SK-N-SH (cell line): ENCODE measurements at regions of chr15 and their contacts with region 1.

Region 1: GRCh38 chr15:88657326-88658069 is 18.7 kb downstream of the ISG20 start:
- DNase-seq: peak; percentile 78
- H3K4me3 ChIP-seq: no peak overlapping the region; a peak in 1 of 4 replicates
- H3K27ac ChIP-seq: no peak overlapping the region
- H3K4me1 ChIP-seq: peaks cover 0 to 17% of the 10 kb centered on the region in 2 experiments; a peak in 1 of 4 replicates
- H3K27me3 ChIP-seq: no peaks in the 10 kb centered on the region
- CTCF ChIP-seq: peak; percentile 83
- EP300 ChIP-seq: no peak
- RAD21 ChIP-seq: peak; percentile 88

Region 2: DNA sequence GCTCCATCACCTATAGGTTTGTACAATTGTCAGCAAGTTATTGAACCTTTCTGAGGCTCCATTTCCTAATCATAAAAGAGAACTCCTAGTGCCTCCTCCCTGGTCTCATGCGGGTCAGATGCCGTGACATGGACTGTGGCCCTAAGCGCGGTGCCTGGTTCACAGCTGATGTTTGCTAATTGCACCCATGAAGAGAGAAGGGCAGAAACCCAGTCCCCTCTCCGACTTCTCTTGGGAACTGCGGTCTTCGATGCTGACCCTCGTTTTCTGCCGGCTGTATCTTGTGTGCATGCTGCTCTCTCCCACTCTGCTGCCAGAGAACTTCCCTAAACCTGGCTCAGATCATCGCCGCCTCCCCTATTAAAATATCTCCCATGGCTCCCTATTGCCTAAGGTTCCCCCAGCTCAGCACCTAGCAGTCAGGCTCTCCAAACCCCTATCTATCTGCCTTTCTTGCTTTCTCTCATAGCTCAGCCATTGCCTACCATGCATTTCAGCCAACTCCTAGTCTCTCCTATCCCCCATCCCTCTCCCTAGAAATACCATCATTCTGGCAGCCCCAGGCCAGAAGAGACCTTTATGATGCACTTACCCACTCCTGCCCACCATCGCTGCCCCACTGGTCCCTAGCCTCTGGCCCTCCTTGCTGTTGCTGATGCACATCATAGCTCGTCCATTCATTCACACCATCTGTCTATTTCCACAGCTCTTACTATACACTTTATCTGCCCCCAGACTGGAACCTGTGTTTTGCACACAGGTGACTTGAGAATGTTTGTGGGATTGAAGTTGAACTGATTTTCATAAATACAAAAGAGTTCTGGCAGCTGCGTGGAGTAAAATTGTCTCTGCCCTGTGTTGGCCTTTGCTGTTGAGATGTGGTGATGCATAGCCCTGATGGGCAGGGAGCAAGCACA is 12.1 kb before region 1 on chr15:
- CTCF ChIA-PET with region 1: interaction called, 10 read pairs
- POLR2A ChIA-PET with region 1: no interaction called
- DNase-seq: no peak
- H3K4me3 ChIP-seq: no peak overlapping the region
- H3K27ac ChIP-seq: no peak overlapping the region
- H3K4me1 ChIP-seq: peaks cover 6 to 16% of the 10 kb centered on the region in 2 experiments; a peak in 2 of 4 replicates
- H3K27me3 ChIP-seq: no peaks in the 10 kb centered on the region
- CTCF ChIP-seq: no peak
- EP300 ChIP-seq: no peak
- RAD21 ChIP-seq: no peak

Region 3: GRCh38 chr15:88695691-88696251 is 38.3 kb after region 1 on chr15:
- CTCF ChIA-PET with region 1: interaction called, 11 read pairs
- POLR2A ChIA-PET with region 1: no interaction called
- DNase-seq: no peak
- H3K4me3 ChIP-seq: no peak overlapping the region
- H3K27ac ChIP-seq: no peak overlapping the region
- H3K4me1 ChIP-seq: peaks cover 0 to 12% of the 10 kb centered on the region in 2 experiments; a peak in 1 of 4 replicates
- H3K27me3 ChIP-seq: no peaks in the 10 kb centered on the region; the same call in 1 of the 2 replicates
- CTCF ChIP-seq: no peak
- EP300 ChIP-seq: no peak
- RAD21 ChIP-seq: no peak

Region 4: GRCh38 chr15:88834211-88834812 is 176.8 kb after region 1 on chr15:
- CTCF ChIA-PET with region 1: interaction called, 50 read pairs
- POLR2A ChIA-PET with region 1: no interaction called
- DNase-seq: peak; percentile 64
- H3K4me3 ChIP-seq: peak overlapping the region in 1 of 2 experiments; percentile 41; a peak in 1 of 4 replicates
- H3K27ac ChIP-seq: no peak overlapping the region
- H3K4me1 ChIP-seq: no peaks in the 10 kb centered on the region
- H3K27me3 ChIP-seq: no peaks in the 10 kb centered on the region
- CTCF ChIP-seq: peak; percentile 62
- EP300 ChIP-seq: no peak
- RAD21 ChIP-seq: peak; percentile 68

Region 5: DNA sequence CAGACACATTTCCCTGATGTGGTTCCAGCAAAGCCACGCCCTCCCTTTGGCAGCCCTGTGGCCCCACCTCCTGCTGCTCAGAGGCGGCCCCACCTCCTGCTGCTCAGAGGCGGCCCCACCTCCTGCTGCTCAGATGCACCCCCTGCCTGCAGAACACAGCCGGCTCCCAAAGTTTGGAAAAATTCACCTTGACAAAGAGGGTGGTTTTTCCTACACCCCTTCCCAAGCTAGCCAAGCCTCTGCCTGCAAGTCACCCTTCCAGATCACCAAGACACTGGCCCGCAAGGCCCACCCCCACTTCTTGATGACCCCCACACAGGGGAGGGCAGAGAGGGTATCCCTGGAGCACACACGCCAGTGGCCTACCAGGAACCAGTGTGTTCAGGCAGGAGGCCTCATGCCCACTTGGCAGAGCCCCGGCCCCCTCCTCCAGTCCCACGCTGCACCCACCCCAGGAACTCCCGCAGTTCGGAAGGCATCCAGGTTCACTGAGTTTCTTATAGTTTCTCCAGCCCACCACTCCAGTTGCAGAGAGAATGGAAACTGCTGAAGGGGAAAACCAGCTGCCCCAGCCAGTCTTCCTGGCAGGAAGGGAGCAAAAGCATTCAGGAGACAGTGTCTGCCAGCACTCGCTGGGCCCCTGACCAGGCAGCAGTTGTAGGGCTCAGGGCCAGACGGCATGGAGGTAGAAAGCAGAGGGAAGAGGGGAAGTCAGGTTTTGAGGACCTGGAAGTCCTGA is 240.1 kb after region 1 on chr15:
- CTCF ChIA-PET with region 1: interaction called, 21 read pairs
- POLR2A ChIA-PET with region 1: no interaction called
- DNase-seq: peak; percentile 88
- H3K4me3 ChIP-seq: no peak overlapping the region
- H3K27ac ChIP-seq: peak overlapping the region in 1 of 2 experiments; percentile 36; a peak in 1 of 4 replicates
- H3K4me1 ChIP-seq: peaks cover 5 to 23% of the 10 kb centered on the region in 2 experiments; a peak in 2 of 4 replicates
- H3K27me3 ChIP-seq: no peaks in the 10 kb centered on the region
- CTCF ChIP-seq: peak; percentile 72
- EP300 ChIP-seq: no peak
- RAD21 ChIP-seq: peak; percentile 41